GM12878 (cell line): ENCODE measurements at regions of chr7 and their contacts with region 1.

Region 1: DNA sequence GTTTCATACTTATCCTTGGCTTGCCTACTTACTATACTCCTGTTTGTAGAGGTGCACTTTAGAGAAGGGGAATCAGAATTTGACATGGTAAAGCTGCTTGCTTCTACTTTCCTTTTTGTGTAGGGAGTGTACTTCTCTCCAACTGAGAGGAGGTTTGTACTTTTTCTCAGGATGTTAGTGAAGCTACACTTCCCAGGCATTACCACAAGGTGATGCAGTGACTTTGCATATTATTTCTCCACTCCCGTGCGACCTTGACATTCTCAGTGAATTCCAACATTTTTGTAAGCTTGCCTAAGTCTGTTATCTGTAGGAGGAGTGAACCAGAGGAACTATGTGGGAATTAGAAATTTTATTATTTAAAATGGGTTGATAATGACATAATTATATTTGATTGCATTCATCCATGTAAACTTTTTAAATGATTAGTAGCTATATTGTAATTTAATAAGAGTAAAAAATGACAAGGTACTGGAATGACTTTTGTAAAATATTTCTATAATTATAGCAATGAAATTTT is 5.2 kb downstream of the TAX1BP1 start:
- DNase-seq: no peak
- ATAC-seq: peak; percentile 21; the same call in 2 of the 3 replicates
- H3K4me3 ChIP-seq: no peak overlapping the region
- H3K27ac ChIP-seq: no peak overlapping the region
- H3K4me1 ChIP-seq: no peaks in the 10 kb centered on the region
- H3K27me3 ChIP-seq: no peaks in the 10 kb centered on the region
- CTCF ChIP-seq: peak; percentile 46 to 64 (median 55); a peak in 5 of 6 replicates
- EP300 ChIP-seq: no peak
- POLR2A ChIP-seq: no peak
- RAD21 ChIP-seq: peak; percentile 58

Region 2: GRCh38 chr7:27767374-27767773 is 22.2 kb after region 1 on chr7:
- CTCF ChIA-PET with region 1: interaction called, 16 read pairs
- POLR2A ChIA-PET with region 1: interaction called, 3 read pairs
- RAD21 ChIA-PET with region 1: interaction called, 5 read pairs
- SMC1A ChIA-PET with region 1: interaction called, 3 read pairs
- in situ Hi-C with region 1: no loop called
- intact Hi-C with region 1: no loop called
- DNase-seq: no peak
- ATAC-seq: no peak
- H3K4me3 ChIP-seq: no peak overlapping the region
- H3K27ac ChIP-seq: no peak overlapping the region
- H3K4me1 ChIP-seq: no peaks in the 10 kb centered on the region
- H3K27me3 ChIP-seq: no peaks in the 10 kb centered on the region
- CTCF ChIP-seq: no peak
- EP300 ChIP-seq: no peak
- POLR2A ChIP-seq: no peak
- RAD21 ChIP-seq: no peak

Region 3: DNA sequence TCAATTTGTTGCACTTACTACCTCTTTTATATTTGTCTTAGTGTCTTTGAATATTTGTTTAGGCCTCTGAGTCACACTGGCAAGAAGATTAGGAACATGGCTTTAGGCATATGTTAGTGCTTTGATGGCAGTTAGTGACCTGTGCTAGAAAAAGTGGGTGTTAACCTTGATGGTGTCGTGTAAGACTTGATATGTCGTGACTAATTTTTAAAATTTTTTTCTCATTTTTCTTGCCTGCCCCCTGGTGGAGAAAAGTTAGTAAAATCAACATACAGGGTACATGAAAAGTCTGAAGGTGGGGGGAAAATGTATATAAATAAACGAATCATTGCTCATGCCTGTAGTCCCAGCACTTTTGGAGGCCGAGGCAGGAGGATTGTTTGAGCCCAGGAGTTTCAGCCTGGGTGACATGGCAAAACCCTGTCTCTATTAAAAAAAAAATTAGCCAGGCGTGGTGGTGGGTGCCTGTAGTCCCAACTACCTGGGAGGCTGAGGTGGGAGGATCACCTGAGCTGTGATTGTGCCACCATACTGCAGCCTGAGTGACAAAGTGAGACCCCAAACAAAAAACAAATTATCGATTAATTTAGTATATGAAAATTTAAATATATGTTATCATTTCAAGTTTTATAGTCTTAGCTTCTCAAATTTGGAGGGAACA is 39.4 kb after region 1 on chr7:
- CTCF ChIA-PET with region 1: interaction called, 10 read pairs
- POLR2A ChIA-PET with region 1: no interaction called
- RAD21 ChIA-PET with region 1: no interaction called
- SMC1A ChIA-PET with region 1: interaction called, 3 read pairs
- in situ Hi-C with region 1: no loop called
- intact Hi-C with region 1: no loop called
- DNase-seq: no peak
- ATAC-seq: peak; percentile 60
- H3K4me3 ChIP-seq: no peak overlapping the region
- H3K27ac ChIP-seq: no peak overlapping the region
- H3K4me1 ChIP-seq: no peaks in the 10 kb centered on the region
- H3K27me3 ChIP-seq: no peaks in the 10 kb centered on the region
- CTCF ChIP-seq: peak; percentile 33 to 45 (median 39); a peak in 5 of 6 replicates
- EP300 ChIP-seq: no peak
- POLR2A ChIP-seq: no peak
- RAD21 ChIP-seq: 0 out of 2 replicates have a peak, but pooled peaks have one; percentile 15

Region 4: DNA sequence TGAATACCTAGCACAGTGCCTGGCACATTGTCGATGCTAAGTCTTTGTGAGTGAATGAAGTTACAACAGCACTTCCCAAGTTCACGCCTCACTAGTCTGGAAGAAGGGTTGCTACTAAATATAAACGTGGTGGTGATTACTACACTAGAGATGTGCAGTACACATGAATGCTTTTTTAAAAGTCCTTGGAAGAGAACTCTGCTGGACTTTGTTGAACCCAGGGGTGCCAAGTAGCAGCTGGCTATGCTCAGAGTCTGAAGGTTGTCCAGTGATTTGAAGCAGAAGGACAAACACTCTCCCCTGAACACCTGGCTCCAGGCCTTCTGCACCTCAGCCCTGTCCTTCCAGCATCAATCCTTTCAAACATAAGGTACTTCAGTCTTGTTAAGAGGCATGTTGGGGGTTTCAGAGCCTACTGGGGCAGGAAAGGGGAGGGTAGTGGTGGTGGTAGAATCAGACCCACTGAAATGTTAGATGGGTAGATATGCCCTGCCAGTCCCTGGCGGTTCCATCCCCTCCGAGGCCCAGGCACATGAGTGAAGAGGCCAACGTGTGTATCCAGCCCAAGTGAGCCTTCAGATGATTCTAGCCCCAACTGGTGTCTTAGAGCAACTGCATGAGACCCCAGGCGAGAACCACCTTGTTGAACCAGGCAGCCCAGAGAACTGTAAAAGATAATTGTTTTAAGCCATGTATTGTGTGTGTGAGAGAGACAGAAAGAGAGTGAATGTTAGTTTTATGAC is 89.2 kb after region 1 on chr7:
- CTCF ChIA-PET with region 1: no interaction called
- POLR2A ChIA-PET with region 1: no interaction called
- RAD21 ChIA-PET with region 1: no interaction called
- SMC1A ChIA-PET with region 1: no interaction called
- in situ Hi-C with region 1: no loop called
- intact Hi-C with region 1: no loop called
- DNase-seq: no peak
- ATAC-seq: no peak
- H3K4me3 ChIP-seq: no peak overlapping the region
- H3K27ac ChIP-seq: no peak overlapping the region
- H3K4me1 ChIP-seq: no peaks in the 10 kb centered on the region
- H3K27me3 ChIP-seq: no peaks in the 10 kb centered on the region
- CTCF ChIP-seq: no peak
- EP300 ChIP-seq: no peak
- POLR2A ChIP-seq: no peak
- RAD21 ChIP-seq: no peak